ENCODE measurements at regions of chr1 and their contacts with region 1.

Region 1: GRCh38 chr1:37486680-37487618 is 12.6 kb downstream of the ZC3H12A start:
- H3K4me3 ChIP-seq: no peak overlapping the region
- H3K27ac ChIP-seq: no peak overlapping the region
- H3K4me1 ChIP-seq: no peaks in the 10 kb centered on the region
- CTCF ChIP-seq: peak; percentile 87

Region 2: DNA sequence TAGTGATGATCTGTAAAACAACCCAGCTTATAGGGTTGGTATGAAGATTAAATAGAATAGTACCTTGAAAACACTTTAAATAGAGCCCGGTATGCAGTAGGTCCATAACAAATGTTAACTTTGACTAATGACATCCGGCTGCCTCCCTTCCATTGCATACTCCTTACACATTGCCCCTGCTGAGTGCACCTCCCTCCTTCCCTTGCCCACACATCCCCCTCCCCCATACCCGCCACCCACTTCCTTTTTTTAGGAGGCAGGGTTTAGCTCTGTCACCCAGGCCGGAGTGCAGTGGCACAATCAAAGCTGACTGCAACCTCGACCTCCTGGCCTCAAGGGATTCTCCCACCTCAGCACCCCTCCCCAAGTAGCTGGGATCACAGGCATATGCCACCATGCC is 37.0 kb before region 1 on chr1:
- CTCF ChIA-PET with region 1: interaction called, 154 read pairs
- POLR2A ChIA-PET with region 1: interaction called, 7 read pairs
- H3K4me3 ChIP-seq: no peak overlapping the region
- H3K27ac ChIP-seq: no peak overlapping the region
- H3K4me1 ChIP-seq: no peaks in the 10 kb centered on the region
- CTCF ChIP-seq: no peak

Region 3: DNA sequence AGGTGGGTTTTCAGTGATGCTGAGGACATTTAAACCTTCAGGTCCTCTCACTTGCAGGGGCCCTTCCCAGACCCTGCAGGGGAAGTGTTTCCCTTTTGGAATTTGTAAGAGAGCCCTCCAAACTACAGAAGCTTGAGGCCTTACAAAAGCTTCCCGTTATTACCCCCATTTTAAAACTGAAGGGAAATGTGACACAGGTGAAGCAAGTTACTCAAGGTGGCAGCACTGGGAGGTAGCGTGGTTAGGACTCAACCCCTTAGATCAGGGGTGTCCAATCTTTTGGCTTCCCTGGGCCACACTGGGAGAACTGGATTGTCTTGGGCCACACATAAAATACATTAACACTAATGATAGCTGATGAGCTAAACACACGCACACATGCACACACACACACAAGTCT is 28.4 kb before region 1 on chr1:
- CTCF ChIA-PET with region 1: interaction called, 154 read pairs
- POLR2A ChIA-PET with region 1: interaction called, 7 read pairs
- H3K4me3 ChIP-seq: no peak overlapping the region
- H3K27ac ChIP-seq: no peak overlapping the region
- H3K4me1 ChIP-seq: no peaks in the 10 kb centered on the region
- CTCF ChIP-seq: no peak

Region 4: GRCh38 chr1:37474046-37474759 is 12.7 kb before region 1 on chr1 and contains the start of gene ZC3H12A:
- CTCF ChIA-PET with region 1: interaction called, 127 read pairs
- POLR2A ChIA-PET with region 1: interaction called, 43 read pairs
- H3K4me3 ChIP-seq: peak within 1 kb of the TSS; percentile 71
- H3K27ac ChIP-seq: peak within 1 kb of the TSS; percentile 42; the same call in 1 of the 2 replicates
- H3K4me1 ChIP-seq: peaks cover 18% of the 10 kb centered on the region
- CTCF ChIP-seq: no peak

Region 5: GRCh38 chr1:37498872-37499617 is 12.1 kb after region 1 on chr1:
- CTCF ChIA-PET with region 1: interaction called, 59 read pairs
- POLR2A ChIA-PET with region 1: interaction called, 3 read pairs
- H3K4me3 ChIP-seq: no peak overlapping the region
- H3K27ac ChIP-seq: no peak overlapping the region
- H3K4me1 ChIP-seq: 0 out of 2 replicates have a peak, but pooled peaks cover 3% of the 10 kb centered on the region
- CTCF ChIP-seq: no peak

Region 6: DNA sequence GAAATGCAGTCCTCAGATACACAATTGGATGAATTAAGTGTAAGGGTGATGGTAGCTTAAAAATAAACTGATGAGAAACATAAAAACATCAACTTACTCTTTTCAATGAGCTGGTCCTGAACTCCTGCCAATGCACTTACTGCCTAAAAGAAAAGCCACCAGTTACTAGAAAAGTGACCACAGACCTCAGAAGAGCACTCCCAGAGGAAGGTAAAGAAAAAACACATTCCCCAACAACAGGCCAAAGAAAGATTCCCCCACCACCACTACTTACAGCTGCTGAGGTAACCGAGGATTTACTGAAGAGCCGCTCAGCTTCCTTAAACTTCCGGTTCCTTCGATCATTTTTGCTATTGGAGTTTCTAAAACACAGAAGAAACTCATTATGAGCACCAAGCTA is 22.2 kb after region 1 on chr1:
- CTCF ChIA-PET with region 1: interaction called, 11 read pairs
- POLR2A ChIA-PET with region 1: no interaction called
- H3K4me3 ChIP-seq: no peak overlapping the region
- H3K27ac ChIP-seq: no peak overlapping the region
- H3K4me1 ChIP-seq: no peaks in the 10 kb centered on the region
- CTCF ChIP-seq: peak; percentile 55

Region 7: DNA sequence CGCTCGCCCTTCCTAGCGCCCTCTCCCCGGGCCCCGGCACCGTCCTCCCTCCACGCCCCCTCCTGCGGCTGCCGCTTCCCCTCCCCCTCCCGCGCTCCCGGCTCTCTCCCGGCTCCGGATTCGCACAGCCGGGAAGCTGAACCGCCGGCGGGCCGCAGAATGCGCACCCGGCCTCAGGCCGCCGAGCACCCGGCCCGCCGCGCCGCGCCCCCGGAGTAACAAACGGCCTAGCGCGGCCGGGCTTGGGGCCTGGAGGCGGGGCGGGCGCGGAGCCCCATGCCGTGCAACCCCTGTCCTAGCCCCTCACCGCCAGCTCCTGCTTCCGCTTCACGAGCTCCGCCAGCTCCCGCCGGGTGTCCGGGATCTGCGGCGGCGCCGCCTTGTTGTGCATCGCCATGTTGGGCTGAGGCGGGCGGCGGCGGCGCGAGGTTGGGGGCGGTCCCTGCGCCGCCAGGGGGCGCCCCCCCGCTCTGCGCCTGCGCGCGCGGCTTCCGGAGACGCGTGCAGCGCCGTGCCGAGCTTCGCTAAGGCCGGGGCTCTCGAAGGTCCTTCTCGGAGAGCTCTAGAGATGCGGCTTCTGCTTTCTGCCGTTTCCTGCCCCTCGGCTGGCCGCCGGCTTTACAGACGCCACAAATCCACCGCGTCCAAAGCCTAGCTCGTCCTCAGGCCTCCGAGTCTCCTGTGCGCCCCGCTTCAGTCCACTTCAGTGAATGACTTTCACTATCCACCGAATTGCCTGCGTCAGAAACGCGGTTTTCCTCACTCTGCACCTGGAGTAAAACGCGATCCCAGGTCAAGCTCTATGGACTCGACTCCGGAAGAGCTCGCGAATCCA is 27.6 kb after region 1 on chr1 and contains the start of gene MEAF6:
- CTCF ChIA-PET with region 1: interaction called, 11 read pairs
- POLR2A ChIA-PET with region 1: interaction called, 10 read pairs
- H3K4me3 ChIP-seq: peak within 1 kb of the TSS; percentile 95
- H3K27ac ChIP-seq: peak within 1 kb of the TSS; percentile 88
- H3K4me1 ChIP-seq: no peaks in the 10 kb centered on the region
- CTCF ChIP-seq: peak; percentile 45